CD8-positive, alpha-beta T cell (primary cell): ENCODE measurements at regions of chr13 and their contacts with region 1.

Region 1: GRCh38 chr13:40149611-40150274 is 494.3 kb downstream of the COG6 start:
- DNase-seq: no peak
- ATAC-seq: no peak
- H3K4me3 ChIP-seq: no peak overlapping the region
- H3K4me3 Mint-ChIP-seq: no peak overlapping the region
- H3K27ac ChIP-seq: no peak overlapping the region
- H3K27ac Mint-ChIP-seq: no peak overlapping the region
- H3K4me1 ChIP-seq: peaks cover 36% of the 10 kb centered on the region
- H3K4me1 Mint-ChIP-seq: peaks cover 59% of the 10 kb centered on the region
- H3K27me3 ChIP-seq: no peaks in the 10 kb centered on the region
- H3K27me3 Mint-ChIP-seq: no peaks in the 10 kb centered on the region
- CTCF ChIP-seq: no peak

Region 2: GRCh38 chr13:40096357-40096901 is 53.3 kb before region 1 on chr13:
- CTCF ChIA-PET with region 1: no interaction called
- POLR2A ChIA-PET with region 1: no interaction called
- intact Hi-C with region 1: loop called in 1 of 2 experiments (anchors 10 kb)
- DNase-seq: peak in 8 of 9 experiments; percentile 13 to 64 (median 31)
- ATAC-seq: peak; percentile 87
- H3K4me3 ChIP-seq: no peak overlapping the region
- H3K4me3 Mint-ChIP-seq: no peak overlapping the region
- H3K27ac ChIP-seq: no peak overlapping the region
- H3K27ac Mint-ChIP-seq: peak overlapping the region; percentile 25
- H3K4me1 ChIP-seq: peaks cover 3% of the 10 kb centered on the region
- H3K4me1 Mint-ChIP-seq: peaks cover 10% of the 10 kb centered on the region
- H3K27me3 ChIP-seq: no peaks in the 10 kb centered on the region
- H3K27me3 Mint-ChIP-seq: no peaks in the 10 kb centered on the region
- CTCF ChIP-seq: no peak